ENCODE measurements at regions of chr6 and their contacts with region 1.

Region 1: DNA sequence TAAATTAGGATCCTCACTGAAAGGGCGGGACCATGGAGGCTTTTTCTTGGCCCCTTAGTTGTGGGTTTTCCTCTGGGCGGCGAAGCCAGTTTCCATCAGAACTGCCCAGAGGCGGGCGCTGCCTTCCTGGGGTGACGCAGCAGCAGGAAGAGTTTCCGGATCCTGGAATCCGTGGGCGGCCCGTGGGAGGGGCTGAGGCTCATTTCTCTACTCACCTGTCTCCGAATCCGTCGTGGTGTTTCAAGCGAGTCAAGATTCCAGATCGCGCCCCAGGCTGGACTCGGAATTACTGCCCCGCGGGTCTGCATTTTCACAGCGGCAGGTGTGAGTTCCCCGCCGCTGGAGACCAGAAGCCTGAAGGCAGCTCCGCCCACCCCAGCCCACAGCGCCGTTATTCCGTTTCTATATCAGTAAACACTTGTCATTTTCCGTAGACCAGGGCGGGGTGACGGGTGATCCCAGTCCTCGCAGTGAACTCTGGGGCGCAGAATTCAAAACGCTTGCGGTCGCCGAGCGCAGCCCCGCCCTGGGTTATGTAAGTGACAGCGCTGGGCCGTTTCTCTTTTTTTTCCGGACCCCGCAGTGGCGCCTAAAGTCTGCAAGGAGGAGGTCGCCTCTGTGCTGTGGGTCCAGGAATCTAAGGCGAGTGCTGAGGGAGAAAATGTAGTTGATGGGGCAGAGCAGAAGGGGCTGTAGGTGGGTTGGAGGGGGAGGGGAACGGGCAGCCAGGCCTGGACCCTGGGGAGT is 27.2 kb upstream of the POU5F1 start:
- DNase-seq: peak; percentile 97
- H3K4me3 Mint-ChIP-seq: peak overlapping the region; percentile 89
- H3K27ac Mint-ChIP-seq: peak overlapping the region; percentile 83
- H3K4me1 Mint-ChIP-seq: peaks cover 53% of the 10 kb centered on the region
- H3K27me3 Mint-ChIP-seq: no peaks in the 10 kb centered on the region

Region 2: GRCh38 chr6:30974488-30975252 is 223.1 kb before region 1 on chr6:
- CTCF ChIA-PET with region 1: no interaction called
- POLR2A ChIA-PET with region 1: no interaction called
- intact Hi-C with region 1: no loop called
- DNase-seq: no peak
- H3K4me3 Mint-ChIP-seq: no peak overlapping the region
- H3K27ac Mint-ChIP-seq: no peak overlapping the region
- H3K4me1 Mint-ChIP-seq: no peaks in the 10 kb centered on the region
- H3K27me3 Mint-ChIP-seq: peaks cover 19% of the 10 kb centered on the region

Region 3: DNA sequence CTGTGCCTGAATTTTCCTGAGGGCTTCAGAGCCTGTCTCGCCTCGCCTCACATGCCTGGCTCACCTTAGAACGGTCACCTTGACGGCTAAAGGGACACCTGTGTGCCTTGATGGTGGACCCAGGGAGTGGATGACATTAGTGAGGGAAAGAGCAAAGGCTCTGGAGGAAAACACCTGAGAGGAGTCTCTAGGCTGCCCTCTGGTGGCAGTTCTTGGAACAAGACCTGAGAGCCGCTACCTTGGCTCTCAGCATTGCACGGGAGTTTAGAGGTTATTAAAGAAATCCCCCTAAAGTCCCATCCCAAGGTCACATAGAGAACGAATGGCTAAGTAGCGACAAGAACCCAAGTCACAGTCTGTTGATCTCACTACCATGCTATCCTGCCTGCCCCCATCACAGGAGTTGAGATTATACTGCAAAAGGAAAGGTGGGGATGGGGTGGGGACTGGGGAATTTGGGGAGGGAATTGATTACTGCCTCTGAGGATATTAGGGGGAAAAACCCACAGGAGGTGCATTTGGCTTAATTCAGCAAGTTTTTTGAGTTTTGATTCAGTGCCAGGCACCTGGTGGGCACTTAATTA is 69.5 kb before region 1 on chr6:
- CTCF ChIA-PET with region 1: interaction called, 16 read pairs
- POLR2A ChIA-PET with region 1: no interaction called
- intact Hi-C with region 1: no loop called
- DNase-seq: peak; percentile 81
- H3K4me3 Mint-ChIP-seq: no peak overlapping the region
- H3K27ac Mint-ChIP-seq: no peak overlapping the region
- H3K4me1 Mint-ChIP-seq: peaks cover 2% of the 10 kb centered on the region
- H3K27me3 Mint-ChIP-seq: peaks cover 2% of the 10 kb centered on the region

Region 4: DNA sequence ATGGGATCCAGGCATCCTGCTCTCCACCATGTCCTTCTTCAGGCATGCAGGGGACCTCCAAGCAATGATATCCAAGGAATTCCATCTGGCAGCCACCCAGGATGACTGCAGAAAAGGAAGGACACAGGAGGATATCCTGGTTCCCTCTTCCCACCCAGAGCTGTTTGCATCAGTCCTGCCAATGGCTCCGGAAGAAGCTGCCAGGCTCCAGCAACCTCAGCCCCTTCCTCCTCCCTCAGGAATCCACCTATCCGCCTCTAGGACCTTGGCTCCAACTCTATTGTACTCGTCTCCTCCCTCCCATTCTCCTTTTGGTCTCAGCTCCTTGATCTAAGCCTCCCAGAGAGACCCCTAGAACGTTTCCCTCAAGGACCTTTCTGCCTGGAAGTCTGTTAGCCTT is 58.1 kb before region 1 on chr6:
- CTCF ChIA-PET with region 1: interaction called, 50 read pairs
- POLR2A ChIA-PET with region 1: no interaction called
- intact Hi-C with region 1: loop called (anchors 1 kb)
- DNase-seq: no peak
- H3K4me3 Mint-ChIP-seq: no peak overlapping the region
- H3K27ac Mint-ChIP-seq: no peak overlapping the region
- H3K4me1 Mint-ChIP-seq: peaks cover 3% of the 10 kb centered on the region
- H3K27me3 Mint-ChIP-seq: no peaks in the 10 kb centered on the region

Region 5: DNA sequence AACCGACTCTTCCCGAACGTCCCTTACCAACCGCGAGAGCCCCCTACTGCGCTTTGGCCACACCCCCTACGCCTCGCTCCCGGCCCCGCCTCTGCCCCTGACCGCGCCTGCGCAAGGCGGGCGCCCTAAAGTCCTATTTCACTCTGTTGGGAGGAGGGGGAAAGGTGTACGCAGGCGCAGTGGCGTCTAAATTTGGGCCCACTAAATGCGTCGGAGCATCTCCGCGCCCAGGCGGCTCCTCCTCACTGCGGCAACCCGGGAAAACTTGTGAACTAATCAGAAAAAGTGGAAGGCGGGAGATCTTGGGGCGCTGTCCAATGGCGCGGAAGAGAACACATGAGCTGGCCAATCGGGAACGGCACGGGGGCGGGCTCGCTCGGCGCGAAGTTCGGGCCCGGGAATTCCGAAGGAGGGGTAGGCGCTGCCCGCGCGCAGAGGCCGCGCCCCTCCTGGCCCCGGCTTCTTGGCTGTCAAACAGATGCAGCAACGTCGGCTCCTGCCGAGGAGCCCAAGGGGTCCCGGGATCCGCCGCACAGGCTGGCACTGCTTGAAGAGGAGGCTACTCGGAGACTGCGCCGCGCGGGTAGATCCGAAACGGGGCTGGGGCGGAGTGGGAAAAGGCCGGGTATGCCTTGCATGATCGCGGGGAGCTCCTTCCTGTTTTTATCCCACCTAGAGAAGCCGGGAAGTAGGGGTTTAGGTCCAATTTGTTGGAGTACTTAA is 39.4 kb before region 1 on chr6 and contains the start of gene TCF19:
- CTCF ChIA-PET with region 1: interaction called, 9 read pairs
- POLR2A ChIA-PET with region 1: interaction called, 5 read pairs
- intact Hi-C with region 1: loop called (anchors 2 kb)
- DNase-seq: peak; percentile 100
- H3K4me3 Mint-ChIP-seq: peak within 1 kb of the TSS; percentile 92
- H3K27ac Mint-ChIP-seq: peak within 1 kb of the TSS; percentile 73
- H3K4me1 Mint-ChIP-seq: peaks cover 29% of the 10 kb centered on the region
- H3K27me3 Mint-ChIP-seq: peaks cover 2% of the 10 kb centered on the region
- total RNA-seq, gene TCF19: 93.0 to 93.1 TPM

Region 6: GRCh38 chr6:31222496-31222895 is 24.8 kb after region 1 on chr6:
- CTCF ChIA-PET with region 1: no interaction called
- POLR2A ChIA-PET with region 1: no interaction called
- intact Hi-C with region 1: no loop called
- DNase-seq: no peak
- H3K4me3 Mint-ChIP-seq: no peak overlapping the region
- H3K27ac Mint-ChIP-seq: no peak overlapping the region
- H3K4me1 Mint-ChIP-seq: no peaks in the 10 kb centered on the region
- H3K27me3 Mint-ChIP-seq: no peaks in the 10 kb centered on the region

Region 7: GRCh38 chr6:31271641-31272357 is 74.1 kb after region 1 on chr6 and contains the start of gene HLA-C:
- CTCF ChIA-PET with region 1: no interaction called
- POLR2A ChIA-PET with region 1: interaction called, 6 read pairs
- intact Hi-C with region 1: loop called (anchors 1 kb)
- DNase-seq: peak; percentile 95
- H3K4me3 Mint-ChIP-seq: peak within 1 kb of the TSS; percentile 95
- H3K27ac Mint-ChIP-seq: peak within 1 kb of the TSS; percentile 99
- H3K4me1 Mint-ChIP-seq: peaks cover 51% of the 10 kb centered on the region
- H3K27me3 Mint-ChIP-seq: no peaks in the 10 kb centered on the region
- total RNA-seq, gene HLA-C: 976 to 983 TPM

Region 8: GRCh38 chr6:31332637-31333602 is 135.2 kb after region 1 on chr6:
- CTCF ChIA-PET with region 1: interaction called, 5 read pairs
- POLR2A ChIA-PET with region 1: no interaction called
- intact Hi-C with region 1: loop called (anchors 1 kb)
- DNase-seq: peak; percentile 39
- H3K4me3 Mint-ChIP-seq: no peak overlapping the region
- H3K27ac Mint-ChIP-seq: peak overlapping the region; percentile 60
- H3K4me1 Mint-ChIP-seq: peaks cover 16% of the 10 kb centered on the region
- H3K27me3 Mint-ChIP-seq: no peaks in the 10 kb centered on the region

Region 9: GRCh38 chr6:31356946-31357466 is 159.3 kb after region 1 on chr6 and contains the start of gene HLA-B:
- CTCF ChIA-PET with region 1: interaction called, 6 read pairs
- POLR2A ChIA-PET with region 1: interaction called, 4 read pairs
- intact Hi-C with region 1: loop called (anchors 1 kb)
- DNase-seq: peak; percentile 90
- H3K4me3 Mint-ChIP-seq: peak within 1 kb of the TSS; percentile 99
- H3K27ac Mint-ChIP-seq: peak within 1 kb of the TSS; percentile 99
- H3K4me1 Mint-ChIP-seq: peaks cover 60% of the 10 kb centered on the region
- H3K27me3 Mint-ChIP-seq: no peaks in the 10 kb centered on the region
- total RNA-seq, gene HLA-B: 3,016 to 3,060 TPM

Measured in activated CD4-positive, alpha-beta memory T cell treated with anti-CD3 and anti-CD28 coated beads for 36 hours (primary cell).